Calu3 (cell line): ENCODE measurements at regions of chr2 and their contacts with region 1.

Region 1: GRCh38 chr2:26668856-26669750 is 23.4 kb upstream of the KCNK3 start:
- DNase-seq: no peak
- H3K4me3 Mint-ChIP-seq: no peak overlapping the region
- H3K27ac Mint-ChIP-seq: peak overlapping the region; percentile 30
- H3K4me1 Mint-ChIP-seq: peaks cover 11% of the 10 kb centered on the region
- H3K27me3 Mint-ChIP-seq: peaks cover 93% of the 10 kb centered on the region
- CTCF ChIP-seq: no peak

Region 2: DNA sequence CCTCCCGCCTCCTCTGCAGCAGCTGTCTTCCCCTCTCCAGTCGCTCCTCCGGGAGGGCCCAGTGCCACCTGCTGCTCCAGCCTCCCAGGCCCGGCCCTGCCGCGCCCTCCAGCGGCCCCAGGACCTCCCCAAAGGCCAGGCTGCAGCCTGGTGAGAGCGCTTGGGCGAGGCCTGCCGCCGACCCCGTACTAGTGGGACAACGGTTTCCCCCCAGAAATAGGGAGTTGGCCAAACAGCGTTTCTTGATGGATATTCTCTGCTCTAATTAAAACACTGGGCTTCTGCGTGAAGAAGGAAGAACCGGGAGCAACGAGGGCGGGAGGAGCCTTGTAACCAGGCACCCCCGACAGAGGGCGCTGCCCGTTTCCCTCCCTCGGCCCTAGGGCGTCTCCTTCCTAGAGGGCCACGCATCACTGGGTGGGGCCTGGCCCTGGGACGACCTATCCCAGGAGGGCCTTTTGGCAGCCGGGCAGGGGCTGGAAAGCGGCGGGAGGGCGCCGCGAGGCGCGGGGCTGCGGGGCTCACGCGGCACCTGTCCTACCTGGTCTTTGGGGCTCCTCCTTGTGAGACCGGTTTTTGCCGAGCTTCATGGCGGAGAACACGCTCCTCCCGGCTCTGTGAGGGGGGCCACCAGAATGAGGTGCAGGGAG is 165.7 kb before region 1 on chr2:
- CTCF ChIA-PET with region 1: no interaction called
- intact Hi-C with region 1: loop called (anchors 5 kb)
- DNase-seq: peak; percentile 90
- H3K4me3 Mint-ChIP-seq: peak overlapping the region; percentile 62
- H3K27ac Mint-ChIP-seq: peak overlapping the region; percentile 3
- H3K4me1 Mint-ChIP-seq: no peaks in the 10 kb centered on the region
- H3K27me3 Mint-ChIP-seq: peaks cover 63% of the 10 kb centered on the region
- CTCF ChIP-seq: peak; percentile 91